Activated T-helper 1 cell treated with anti-CD3 and anti-CD28 coated beads, Interleukin-12 subunit alpha, Interleukin-12 subunit beta, Interleukin-2, Interleukin-4 antibody, amounts not matched to agents 30 ng/mL and 10 ng/mL and 1 ng/mL, durations not matched to agents 14 hours and 24 hours and 36 hours (primary cell): ENCODE measurements at regions of chr11 and their contacts with region 1.

Region 1: GRCh38 chr11:106540001-106540400 is 462.5 kb downstream of the AASDHPPT start:
- DNase-seq: no peak
- H3K4me3 Mint-ChIP-seq: no peak overlapping the region
- H3K27ac Mint-ChIP-seq: no peak overlapping the region
- H3K4me1 Mint-ChIP-seq: no peaks in the 10 kb centered on the region
- H3K27me3 Mint-ChIP-seq: no peaks in the 10 kb centered on the region

Region 2: DNA sequence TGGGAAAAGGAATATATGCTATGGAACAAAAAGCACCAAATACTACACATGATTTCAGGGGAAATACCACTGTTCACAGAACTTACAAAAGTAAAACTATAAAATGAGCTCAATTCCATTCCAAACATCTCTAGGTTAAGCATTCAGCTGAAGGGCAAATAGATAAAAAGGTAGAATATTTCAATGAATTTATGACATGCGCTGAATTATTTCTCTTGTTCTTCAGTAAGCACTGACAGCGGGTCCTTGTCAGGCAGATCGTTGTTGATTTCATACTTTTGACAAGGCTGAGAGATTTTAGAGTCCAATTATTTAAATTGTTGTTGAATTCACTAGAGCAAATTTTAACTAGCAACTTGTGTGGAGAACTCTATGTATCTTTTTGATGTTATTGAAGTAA is 28.6 kb after region 1 on chr11:
- intact Hi-C with region 1: loop called (anchors 1 kb)
- DNase-seq: no peak
- H3K4me3 Mint-ChIP-seq: no peak overlapping the region
- H3K27ac Mint-ChIP-seq: no peak overlapping the region
- H3K4me1 Mint-ChIP-seq: no peaks in the 10 kb centered on the region
- H3K27me3 Mint-ChIP-seq: no peaks in the 10 kb centered on the region

Region 3: GRCh38 chr11:106656646-106657045 is 116.6 kb after region 1 on chr11:
- intact Hi-C with region 1: no loop called
- DNase-seq: no peak
- H3K4me3 Mint-ChIP-seq: no peak overlapping the region
- H3K27ac Mint-ChIP-seq: no peak overlapping the region
- H3K4me1 Mint-ChIP-seq: no peaks in the 10 kb centered on the region
- H3K27me3 Mint-ChIP-seq: no peaks in the 10 kb centered on the region